A673 (cell line): ENCODE measurements at regions of chr3 and their contacts with region 1.

Region 1: GRCh38 chr3:178684881-178685590 is 148.8 kb downstream of the KCNMB2 start:
- DNase-seq: peak; percentile 15
- H3K4me3 ChIP-seq: no peak overlapping the region
- H3K27ac ChIP-seq: no peak overlapping the region
- H3K4me1 ChIP-seq: no peaks in the 10 kb centered on the region
- H3K27me3 ChIP-seq: no peaks in the 10 kb centered on the region
- CTCF ChIP-seq: no peak

Region 2: DNA sequence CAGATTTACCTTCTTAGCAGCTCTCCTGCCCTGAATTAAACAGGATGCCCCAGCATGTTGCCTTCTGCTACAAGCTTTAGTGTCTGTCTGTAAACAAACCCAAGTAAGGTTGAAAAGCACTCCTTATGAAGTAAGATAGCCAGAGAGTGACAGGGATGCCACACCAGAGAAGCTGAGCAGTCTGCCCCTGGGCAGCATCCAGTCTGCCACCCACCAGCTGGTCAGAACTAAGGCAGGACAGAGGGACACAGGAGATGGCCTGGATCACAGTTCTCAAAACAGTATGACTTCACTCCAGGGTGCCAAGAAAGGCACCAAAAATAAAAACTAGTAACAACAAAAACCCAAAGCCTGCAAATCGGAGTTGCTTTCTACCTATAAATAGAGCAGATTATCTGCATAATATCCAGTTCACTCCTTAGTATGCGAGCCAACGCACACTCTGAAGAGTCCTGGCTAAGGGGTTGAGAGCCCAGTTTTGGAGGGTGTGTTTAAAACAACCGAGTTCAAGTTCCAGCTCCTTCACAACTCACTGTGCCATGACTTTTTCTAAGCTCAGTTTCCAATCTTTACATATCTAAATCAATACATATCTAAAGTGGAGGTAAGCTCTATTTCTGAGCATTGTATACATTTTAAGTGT is 50.1 kb after region 1 on chr3:
- CTCF ChIA-PET with region 1: no interaction called
- POLR2A ChIA-PET with region 1: no interaction called
- intact Hi-C with region 1: loop called (anchors 1 kb)
- DNase-seq: no peak
- H3K4me3 ChIP-seq: no peak overlapping the region
- H3K27ac ChIP-seq: no peak overlapping the region
- H3K4me1 ChIP-seq: no peaks in the 10 kb centered on the region
- H3K27me3 ChIP-seq: no peaks in the 10 kb centered on the region
- CTCF ChIP-seq: no peak

Region 3: GRCh38 chr3:178762385-178762784 is 77.3 kb after region 1 on chr3:
- CTCF ChIA-PET with region 1: no interaction called
- POLR2A ChIA-PET with region 1: no interaction called
- intact Hi-C with region 1: no loop called
- DNase-seq: no peak
- H3K4me3 ChIP-seq: no peak overlapping the region
- H3K27ac ChIP-seq: no peak overlapping the region
- H3K4me1 ChIP-seq: no peaks in the 10 kb centered on the region
- H3K27me3 ChIP-seq: no peaks in the 10 kb centered on the region
- CTCF ChIP-seq: no peak

Region 4: GRCh38 chr3:178868681-178869080 is 183.6 kb after region 1 on chr3:
- CTCF ChIA-PET with region 1: no interaction called
- POLR2A ChIA-PET with region 1: no interaction called
- intact Hi-C with region 1: no loop called
- DNase-seq: no peak
- H3K4me3 ChIP-seq: no peak overlapping the region
- H3K27ac ChIP-seq: no peak overlapping the region
- H3K4me1 ChIP-seq: no peaks in the 10 kb centered on the region
- H3K27me3 ChIP-seq: no peaks in the 10 kb centered on the region
- CTCF ChIP-seq: no peak